Activated CD4-positive, alpha-beta T cell treated with anti-CD3 and anti-CD28 coated beads, Interleukin-2, amount 10 ng/mL, durations not matched to agents 24 days and 14 days (primary cell): ENCODE measurements at regions of chr2 and their contacts with region 1.

Region 1: DNA sequence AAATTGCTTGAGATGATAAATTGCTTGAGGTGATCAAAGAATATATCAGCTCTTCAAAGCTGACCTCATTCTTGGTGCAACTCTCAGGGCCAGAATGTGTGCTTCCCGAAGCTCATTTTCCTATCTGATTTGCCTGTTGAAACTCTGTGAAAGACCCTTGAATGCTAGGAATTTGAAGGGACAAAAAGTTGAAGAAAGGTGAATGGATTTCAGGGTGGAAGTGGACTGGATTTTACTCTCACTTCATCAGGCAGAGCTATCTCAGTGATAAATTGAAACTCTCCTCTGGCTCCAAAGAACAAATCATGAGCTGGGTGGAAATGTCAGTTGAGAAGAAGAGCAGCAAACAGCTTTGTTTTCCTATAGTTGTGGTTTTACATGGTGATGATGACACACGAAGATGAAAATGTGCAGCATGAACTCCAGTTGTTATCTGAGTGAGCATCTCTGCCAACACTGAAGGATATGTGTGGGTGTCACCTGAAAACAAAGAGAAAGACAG is 34.4 kb downstream of the CD28 start:
- DNase-seq: peak; percentile 89
- H3K4me3 Mint-ChIP-seq: peak overlapping the region; percentile 69
- H3K27ac Mint-ChIP-seq: peak overlapping the region; percentile 96
- H3K4me1 Mint-ChIP-seq: peaks cover 72% of the 10 kb centered on the region
- H3K27me3 Mint-ChIP-seq: no peaks in the 10 kb centered on the region

Region 2: GRCh38 chr2:203718087-203718486 is 22.7 kb before region 1 on chr2:
- intact Hi-C with region 1: loop called (anchors 1 kb)
- DNase-seq: peak; percentile 92
- H3K4me3 Mint-ChIP-seq: peak overlapping the region; percentile 66
- H3K27ac Mint-ChIP-seq: peak overlapping the region; percentile 99
- H3K4me1 Mint-ChIP-seq: peaks cover 91% of the 10 kb centered on the region
- H3K27me3 Mint-ChIP-seq: no peaks in the 10 kb centered on the region

Region 3: GRCh38 chr2:203804070-203804469 is 63.2 kb after region 1 on chr2:
- intact Hi-C with region 1: loop called (anchors 1 kb)
- DNase-seq: peak; percentile 82
- H3K4me3 Mint-ChIP-seq: peak overlapping the region; percentile 40
- H3K27ac Mint-ChIP-seq: peak overlapping the region; percentile 84
- H3K4me1 Mint-ChIP-seq: peaks cover 60% of the 10 kb centered on the region
- H3K27me3 Mint-ChIP-seq: no peaks in the 10 kb centered on the region

Region 4: DNA sequence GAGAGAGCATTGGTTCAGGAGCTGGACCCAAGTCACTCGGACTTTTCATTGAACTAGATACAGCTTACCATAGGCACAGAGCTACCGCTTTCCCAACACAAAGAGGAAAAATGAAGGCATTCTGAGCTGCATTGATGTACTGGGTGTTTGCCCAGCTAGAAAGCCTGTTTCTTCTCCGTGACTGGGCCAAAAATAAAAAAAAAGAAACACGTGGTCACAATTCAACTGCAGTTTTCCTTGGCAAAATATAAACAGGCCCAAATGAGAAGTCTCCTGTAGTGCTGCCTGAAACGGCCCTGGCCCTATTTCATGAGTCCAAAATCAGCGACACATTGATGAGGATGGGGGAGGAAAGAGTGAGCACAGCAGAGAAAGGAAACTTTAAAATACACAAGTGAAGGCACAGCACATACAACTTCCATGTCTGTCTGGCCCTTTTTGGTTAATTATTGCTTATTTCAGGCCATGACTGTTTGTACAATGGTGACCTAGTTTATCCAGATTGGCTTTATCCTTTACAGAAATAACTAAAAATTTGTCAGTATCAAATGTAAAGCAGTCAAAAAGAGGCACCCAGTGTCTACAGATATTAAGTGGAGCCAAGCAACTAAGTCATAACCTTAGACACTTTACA is 375.4 kb after region 1 on chr2:
- intact Hi-C with region 1: no loop called
- DNase-seq: no peak
- H3K4me3 Mint-ChIP-seq: no peak overlapping the region
- H3K27ac Mint-ChIP-seq: no peak overlapping the region
- H3K4me1 Mint-ChIP-seq: peaks cover 21% of the 10 kb centered on the region
- H3K27me3 Mint-ChIP-seq: no peaks in the 10 kb centered on the region